ENCODE measurements at regions of chr2 and their contacts with region 1.

Region 1: DNA sequence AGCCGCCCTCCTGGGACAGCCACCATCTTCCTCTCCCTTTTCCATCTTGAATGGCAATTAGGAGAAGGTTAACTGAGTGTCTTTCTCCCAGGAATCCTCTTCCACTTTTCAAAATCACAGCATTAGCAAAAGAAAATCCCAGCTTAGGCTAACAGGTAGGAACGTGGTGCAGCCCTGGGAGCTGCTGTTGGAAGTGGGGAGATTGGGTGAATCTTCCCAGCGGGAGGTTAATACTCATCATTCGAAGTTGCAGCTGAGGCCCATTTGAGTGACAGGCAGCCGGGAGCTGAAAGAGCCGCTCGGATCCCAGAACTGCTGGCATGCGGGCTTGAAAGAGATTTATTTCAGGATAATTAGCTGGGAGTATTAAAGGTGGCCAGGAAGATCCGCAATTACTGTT is 306.0 kb downstream of the BCL11A start:
- DNase-seq: no peak
- H3K4me3 ChIP-seq: no peak overlapping the region
- CTCF ChIP-seq: no peak
- POLR2A ChIP-seq: no peak

Region 2: DNA sequence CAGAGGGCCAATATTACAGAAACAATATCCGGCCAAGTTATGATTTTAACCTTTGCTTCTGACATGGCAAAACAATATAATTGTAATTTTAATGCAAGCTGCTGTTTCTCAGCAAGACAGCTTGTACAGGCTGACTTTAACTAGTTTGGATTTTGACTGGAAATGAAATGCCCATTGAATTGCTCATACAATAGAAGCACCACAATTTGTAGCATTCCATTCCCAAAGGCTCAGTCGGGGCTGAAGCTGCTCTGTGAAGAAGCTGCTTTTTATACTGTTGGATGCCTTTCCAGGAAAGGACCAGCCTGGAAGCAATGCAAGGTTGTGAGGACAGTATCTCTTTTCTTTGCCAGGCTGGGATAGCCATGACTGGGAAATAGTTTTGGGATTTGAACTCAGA is 1329.3 kb before region 1 on chr2:
- intact Hi-C with region 1: no loop called
- DNase-seq: no peak
- H3K4me3 ChIP-seq: no peak overlapping the region
- CTCF ChIP-seq: no peak
- POLR2A ChIP-seq: no peak

Region 3: GRCh38 chr2:59761966-59762365 is 485.5 kb before region 1 on chr2:
- intact Hi-C with region 1: loop called (anchors 5 kb)
- DNase-seq: no peak
- H3K4me3 ChIP-seq: no peak overlapping the region
- CTCF ChIP-seq: no peak
- POLR2A ChIP-seq: no peak